ENCODE measurements at regions of chr2 and their contacts with region 1.

Region 1: GRCh38 chr2:237474931-237475703 is 11.9 kb upstream of the MLPH start:
- DNase-seq: no peak
- H3K4me3 ChIP-seq: peak overlapping the region; percentile 78 to 85 (median 80)
- H3K27ac ChIP-seq: peak overlapping the region; percentile 91 to 95 (median 93)
- H3K4me1 ChIP-seq: peaks cover 20 to 55% (median 50%) of the 10 kb centered on the region in 4 donors
- H3K27me3 ChIP-seq: no peaks in the 10 kb centered on the region
- CTCF ChIP-seq: peak; percentile 91 to 97 (median 96)
- EP300 ChIP-seq: no peak
- POLR2A ChIP-seq: no peak

Region 2: GRCh38 chr2:237092920-237093781 is 382.0 kb before region 1 on chr2:
- intact Hi-C with region 1: loop called (anchors 10 kb)
- DNase-seq: no peak
- H3K4me3 ChIP-seq: no peak overlapping the region
- H3K27ac ChIP-seq: peak overlapping the region; percentile 70 to 83 (median 77)
- H3K4me1 ChIP-seq: peaks cover 18 to 45% (median 41%) of the 10 kb centered on the region in 4 donors
- H3K27me3 ChIP-seq: no peaks in the 10 kb centered on the region
- CTCF ChIP-seq: peak; percentile 66 to 80 (median 66)
- EP300 ChIP-seq: no peak
- POLR2A ChIP-seq: no peak

Region 3: DNA sequence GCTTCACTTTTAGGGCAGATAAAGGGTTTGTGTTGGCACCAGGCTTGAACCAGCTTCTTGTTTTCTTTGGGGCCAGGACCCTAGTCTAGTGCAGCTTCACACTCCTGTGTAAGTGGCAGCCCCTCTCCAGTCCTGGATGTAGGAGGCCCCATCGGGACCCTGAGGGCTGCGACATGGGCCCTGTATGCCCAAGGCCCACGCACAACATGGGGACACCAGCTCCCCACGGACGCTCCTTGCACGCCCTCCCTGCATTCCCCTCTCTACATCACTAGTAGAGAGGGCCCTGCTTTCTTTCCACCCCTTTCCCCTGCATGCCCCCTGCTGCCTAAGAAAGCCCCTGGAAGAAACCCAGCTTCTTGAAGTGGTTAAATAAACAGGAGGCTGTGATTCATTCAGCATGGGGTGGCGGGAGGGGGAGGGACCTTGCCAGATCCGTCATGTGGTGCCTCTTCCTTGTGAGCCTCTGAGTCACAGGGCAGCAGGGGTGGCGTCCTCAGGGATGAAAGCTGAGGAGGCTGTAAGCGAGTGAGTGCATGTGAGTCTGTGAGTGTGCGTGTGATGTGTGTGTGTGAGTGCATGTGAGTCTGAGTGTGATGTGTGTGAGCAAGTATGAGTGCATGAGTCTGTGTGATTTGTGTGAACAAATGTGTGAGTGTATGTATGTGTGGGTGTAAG is 347.0 kb before region 1 on chr2:
- intact Hi-C with region 1: loop called (anchors 5 kb)
- DNase-seq: peak; percentile 97
- H3K4me3 ChIP-seq: no peak overlapping the region
- H3K27ac ChIP-seq: peak overlapping the region; percentile 68 to 82 (median 78)
- H3K4me1 ChIP-seq: peaks cover 6 to 37% (median 33%) of the 10 kb centered on the region in 4 donors
- H3K27me3 ChIP-seq: no peaks in the 10 kb centered on the region
- CTCF ChIP-seq: peak in 1 of 3 experiments; percentile 15
- EP300 ChIP-seq: no peak
- POLR2A ChIP-seq: no peak

Region 4: GRCh38 chr2:237165405-237166276 is 309.5 kb before region 1 on chr2:
- intact Hi-C with region 1: loop called (anchors 5 kb)
- DNase-seq: peak; percentile 86
- H3K4me3 ChIP-seq: no peak overlapping the region
- H3K27ac ChIP-seq: peak overlapping the region in 2 of 4 donors; percentile 26 to 56
- H3K4me1 ChIP-seq: peaks cover 0 to 13% (median 4%) of the 10 kb centered on the region in 4 donors
- H3K27me3 ChIP-seq: no peaks in the 10 kb centered on the region
- CTCF ChIP-seq: peak; percentile 49
- EP300 ChIP-seq: no peak
- POLR2A ChIP-seq: no peak

Region 5: DNA sequence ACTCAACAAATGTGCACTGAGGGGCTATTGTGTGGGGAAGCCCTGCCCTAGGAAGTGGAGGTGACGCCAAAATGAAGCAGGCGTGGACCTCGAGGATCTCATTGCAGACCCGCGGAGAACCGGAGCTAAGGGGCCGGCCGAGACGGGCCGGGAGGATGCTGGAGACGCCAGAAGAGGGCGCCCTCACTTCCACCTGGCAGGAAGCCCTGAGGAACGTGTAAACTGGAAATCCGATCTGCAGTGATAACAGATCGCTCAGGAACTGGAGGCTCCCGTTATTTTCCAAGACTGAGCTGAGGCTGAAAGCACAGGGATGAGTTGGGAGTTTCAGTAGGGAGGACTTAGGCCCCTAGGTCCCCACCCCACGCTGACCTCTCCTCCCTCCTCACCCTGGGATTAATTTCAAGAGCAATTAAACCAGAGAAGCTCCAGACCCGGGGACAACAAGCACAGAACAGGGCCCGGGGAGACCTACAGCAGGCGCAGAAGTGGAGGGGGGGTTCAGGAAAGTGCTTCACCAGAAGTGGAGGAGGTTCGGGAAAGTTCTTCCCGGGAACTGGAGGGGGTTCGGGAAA is 53.5 kb before region 1 on chr2:
- intact Hi-C with region 1: loop called (anchors 1 kb)
- DNase-seq: no peak
- H3K4me3 ChIP-seq: peak overlapping the region; percentile 15 to 39 (median 27)
- H3K27ac ChIP-seq: peak overlapping the region; percentile 72 to 81 (median 76)
- H3K4me1 ChIP-seq: peaks cover 11 to 20% (median 14%) of the 10 kb centered on the region in 4 donors
- H3K27me3 ChIP-seq: no peaks in the 10 kb centered on the region
- CTCF ChIP-seq: peak; percentile 80 to 89 (median 86)
- EP300 ChIP-seq: no peak
- POLR2A ChIP-seq: no peak

Region 6: GRCh38 chr2:237434866-237435311 is 40.2 kb before region 1 on chr2:
- intact Hi-C with region 1: no loop called
- DNase-seq: no peak
- H3K4me3 ChIP-seq: no peak overlapping the region
- H3K27ac ChIP-seq: peak overlapping the region; percentile 74 to 83 (median 78)
- H3K4me1 ChIP-seq: peaks cover 16 to 61% (median 51%) of the 10 kb centered on the region in 4 donors
- H3K27me3 ChIP-seq: no peaks in the 10 kb centered on the region
- CTCF ChIP-seq: no peak
- EP300 ChIP-seq: no peak
- POLR2A ChIP-seq: no peak